ENCODE measurements at regions of chr19 and their contacts with region 1.

Region 1: GRCh38 chr19:37906869-37907734 is at the start of gene SIPA1L3:
- DNase-seq: peak; percentile 97
- H3K4me3 Mint-ChIP-seq: peak within 1 kb of the TSS; percentile 76
- H3K27ac Mint-ChIP-seq: no peak within 1 kb of the TSS
- H3K4me1 Mint-ChIP-seq: peaks cover 13% of the 10 kb centered on the region
- H3K27me3 Mint-ChIP-seq: no peaks in the 10 kb centered on the region
- CTCF ChIP-seq: no peak
- total RNA-seq, gene SIPA1L3: 36.0 and 36.9 TPM in 2 replicates

Region 2: GRCh38 chr19:37931881-37932655 is 25.0 kb after region 1 on chr19:
- CTCF ChIA-PET with region 1: interaction called, 18 read pairs
- POLR2A ChIA-PET with region 1: interaction called, 48 read pairs
- intact Hi-C with region 1: loop called (anchors 1 kb)
- DNase-seq: peak; percentile 96
- H3K4me3 Mint-ChIP-seq: peak overlapping the region; percentile 75
- H3K27ac Mint-ChIP-seq: peak overlapping the region; percentile 94
- H3K4me1 Mint-ChIP-seq: peaks cover 30% of the 10 kb centered on the region
- H3K27me3 Mint-ChIP-seq: no peaks in the 10 kb centered on the region
- CTCF ChIP-seq: no peak

Region 3: DNA sequence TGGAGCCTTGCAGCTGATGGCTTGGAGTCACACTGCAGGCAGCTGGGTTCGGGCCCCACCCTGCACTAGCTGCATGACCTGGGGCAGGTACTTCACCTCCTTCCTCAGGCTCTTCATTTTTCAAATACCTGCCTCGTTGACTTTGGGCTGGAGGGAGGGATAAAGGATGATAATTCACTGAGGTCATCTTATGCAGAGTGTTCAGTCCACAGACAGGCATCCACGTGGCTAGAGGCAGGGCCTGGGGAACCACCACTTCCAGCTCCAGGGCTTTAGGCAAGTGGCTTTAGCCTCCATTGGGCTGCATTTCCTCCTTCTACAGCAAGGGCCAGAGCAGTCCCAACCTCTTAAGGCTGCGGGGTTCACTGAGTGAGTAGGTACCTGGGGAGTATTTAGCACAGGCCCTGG is 84.7 kb after region 1 on chr19:
- CTCF ChIA-PET with region 1: interaction called, 51 read pairs
- POLR2A ChIA-PET with region 1: interaction called, 16 read pairs
- intact Hi-C with region 1: loop called (anchors 1 kb)
- DNase-seq: no peak
- H3K4me3 Mint-ChIP-seq: no peak overlapping the region
- H3K27ac Mint-ChIP-seq: no peak overlapping the region
- H3K4me1 Mint-ChIP-seq: peaks cover 19% of the 10 kb centered on the region
- H3K27me3 Mint-ChIP-seq: no peaks in the 10 kb centered on the region
- CTCF ChIP-seq: no peak

Region 4: DNA sequence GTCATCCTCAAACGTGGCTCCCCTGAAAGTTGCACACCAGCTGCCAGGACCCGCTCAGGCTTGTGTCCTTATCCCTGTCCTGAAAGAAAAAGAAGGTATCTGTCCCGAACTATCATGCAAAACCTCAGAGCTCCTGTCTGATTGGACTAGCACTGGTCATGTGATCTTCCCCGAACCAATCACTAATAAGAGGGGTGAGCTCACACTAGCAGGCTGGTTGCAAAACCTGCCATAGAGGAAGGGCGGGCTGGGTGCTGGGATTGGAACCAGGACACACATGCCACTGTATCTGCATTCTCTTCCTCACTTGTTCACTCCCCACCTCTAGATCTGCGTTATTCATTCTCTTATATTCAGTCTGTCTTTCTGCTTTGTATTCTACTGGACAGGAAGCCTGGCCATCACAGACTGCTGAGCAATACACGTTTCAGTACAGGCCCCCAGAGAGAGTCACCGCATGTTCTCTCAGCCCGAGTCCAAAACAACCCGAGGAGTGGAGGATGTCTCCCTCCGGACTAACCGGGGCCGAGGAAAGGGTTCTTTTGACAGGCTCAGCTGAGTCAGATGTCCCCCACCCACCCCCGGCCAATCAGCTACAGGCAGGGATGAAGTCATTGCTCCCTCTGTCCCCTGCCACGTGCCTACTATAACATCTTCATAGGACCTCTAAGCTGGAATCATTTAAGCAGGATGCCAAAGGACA is 97.6 kb after region 1 on chr19:
- CTCF ChIA-PET with region 1: interaction called, 26 read pairs
- POLR2A ChIA-PET with region 1: interaction called, 51 read pairs
- intact Hi-C with region 1: no loop called
- DNase-seq: peak; percentile 99
- H3K4me3 Mint-ChIP-seq: no peak overlapping the region
- H3K27ac Mint-ChIP-seq: no peak overlapping the region
- H3K4me1 Mint-ChIP-seq: peaks cover 5% of the 10 kb centered on the region
- H3K27me3 Mint-ChIP-seq: no peaks in the 10 kb centered on the region
- CTCF ChIP-seq: no peak

Region 5: DNA sequence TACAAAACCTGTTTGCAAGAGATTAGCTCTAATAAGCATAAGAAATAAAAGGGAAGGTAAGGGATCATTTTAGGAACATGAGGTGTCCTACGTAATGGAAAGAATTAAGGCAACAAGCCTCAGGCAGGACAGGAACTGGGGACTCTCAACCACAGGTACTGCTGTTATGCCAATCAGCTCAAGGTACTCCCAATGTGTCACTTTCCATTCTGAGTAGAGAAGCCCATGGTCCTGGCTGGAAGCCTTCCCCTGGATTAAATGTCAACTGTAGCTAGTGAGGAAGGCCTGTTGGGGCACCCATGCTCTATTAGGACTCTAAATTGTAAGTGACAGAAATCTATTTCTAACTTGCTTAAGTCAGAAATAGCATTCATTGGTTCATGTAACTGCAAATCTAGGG is 182.3 kb after region 1 on chr19:
- CTCF ChIA-PET with region 1: interaction called, 24 read pairs
- POLR2A ChIA-PET with region 1: interaction called, 6 read pairs
- intact Hi-C with region 1: no loop called
- DNase-seq: no peak
- H3K4me3 Mint-ChIP-seq: no peak overlapping the region
- H3K27ac Mint-ChIP-seq: no peak overlapping the region
- H3K4me1 Mint-ChIP-seq: no peaks in the 10 kb centered on the region
- H3K27me3 Mint-ChIP-seq: no peaks in the 10 kb centered on the region
- CTCF ChIP-seq: no peak

Region 6: DNA sequence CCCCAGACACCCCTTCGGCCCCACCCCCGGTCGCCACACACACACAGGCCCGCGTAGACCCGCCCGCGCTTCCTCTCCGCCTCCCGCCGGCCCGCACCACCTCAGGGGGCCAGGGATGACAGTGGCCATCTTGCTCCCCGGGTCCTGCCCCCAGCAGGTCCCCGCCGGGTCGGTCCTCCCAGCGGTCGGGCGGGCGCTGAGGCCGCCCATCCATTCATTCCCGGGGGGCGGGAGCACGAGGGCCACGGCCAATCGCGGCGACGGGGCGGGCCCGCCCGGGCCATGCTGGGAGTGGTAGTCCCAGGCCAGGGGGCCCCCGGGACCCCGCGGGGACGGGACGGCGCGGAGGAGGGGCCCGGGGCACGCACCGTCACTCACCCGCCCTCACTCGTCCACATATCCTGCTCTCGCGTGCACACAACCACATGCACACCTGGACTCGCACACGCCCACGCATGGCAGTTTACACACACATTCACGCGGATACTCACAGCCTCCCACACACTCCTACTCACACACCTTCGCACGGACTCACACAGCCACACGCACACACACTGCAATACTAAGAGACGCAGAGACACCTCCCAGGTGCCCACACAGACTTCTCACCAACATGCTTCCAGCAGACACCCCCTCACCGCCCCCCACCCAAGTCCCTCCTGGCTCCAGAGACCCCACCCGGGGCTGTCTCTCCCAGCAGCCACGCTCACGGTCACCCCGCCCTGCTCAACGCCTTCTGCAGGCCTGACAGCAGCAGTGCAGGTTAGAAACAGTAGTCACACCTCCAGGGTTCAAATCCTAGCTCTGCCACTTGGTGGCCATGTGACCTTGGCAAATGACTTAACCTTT is 317.1 kb after region 1 on chr19 and contains the start of gene DPF1:
- CTCF ChIA-PET with region 1: interaction called, 13 read pairs
- POLR2A ChIA-PET with region 1: no interaction called
- intact Hi-C with region 1: loop called (anchors 1 kb)
- DNase-seq: peak; percentile 74
- H3K4me3 Mint-ChIP-seq: peak within 1 kb of the TSS; percentile 62
- H3K27ac Mint-ChIP-seq: peak within 1 kb of the TSS; percentile 7
- H3K4me1 Mint-ChIP-seq: peaks cover 28% of the 10 kb centered on the region
- H3K27me3 Mint-ChIP-seq: peaks cover 19% of the 10 kb centered on the region
- CTCF ChIP-seq: peak; percentile 25
- total RNA-seq, gene DPF1: 1.0 and 1.2 TPM in 2 replicates

Region 7: DNA sequence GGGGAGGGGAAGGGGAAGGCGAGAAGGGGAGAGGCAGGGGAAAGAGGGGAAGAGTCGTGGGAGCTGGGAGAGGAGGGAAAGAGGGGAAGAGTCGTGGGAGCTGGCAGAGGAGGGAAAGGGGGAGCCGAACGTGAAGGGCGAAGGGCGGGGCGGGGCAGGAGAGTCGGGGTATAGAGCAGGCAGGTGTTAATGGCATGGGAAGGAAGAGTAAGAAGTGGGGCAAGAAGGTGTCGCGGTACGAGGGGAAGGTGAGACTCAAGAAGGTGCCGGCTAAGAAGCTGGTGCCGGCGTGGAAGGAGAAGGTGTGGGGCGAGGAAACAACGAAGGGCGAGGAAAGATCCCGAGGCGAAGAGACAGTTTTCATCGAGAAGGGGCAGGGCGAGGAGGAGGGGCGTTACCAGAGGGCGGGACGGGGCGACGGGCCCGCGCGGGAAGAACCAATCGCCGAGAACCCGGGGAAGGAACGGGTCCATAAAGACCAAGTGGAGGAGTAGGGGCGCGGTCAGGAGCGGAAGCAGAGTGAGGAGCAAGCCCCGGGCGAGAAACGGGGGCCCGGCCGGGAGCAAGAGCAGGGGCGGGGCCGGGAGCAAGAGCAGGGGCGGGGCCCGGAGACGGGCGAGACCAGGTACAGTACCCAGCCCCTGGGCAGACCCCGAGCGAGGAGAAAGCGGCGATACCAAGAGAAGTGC is 429.0 kb after region 1 on chr19:
- CTCF ChIA-PET with region 1: interaction called, 5 read pairs
- POLR2A ChIA-PET with region 1: interaction called, 3 read pairs
- intact Hi-C with region 1: loop called (anchors 1 kb)
- DNase-seq: peak; percentile 98
- H3K4me3 Mint-ChIP-seq: peak overlapping the region; percentile 97
- H3K27ac Mint-ChIP-seq: peak overlapping the region; percentile 88
- H3K4me1 Mint-ChIP-seq: peaks cover 14% of the 10 kb centered on the region
- H3K27me3 Mint-ChIP-seq: no peaks in the 10 kb centered on the region
- CTCF ChIP-seq: no peak

Measured in MCF 10A (cell line).